ENCODE measurements at regions of chr17 and their contacts with region 1.

Region 1: GRCh38 chr17:7136266-7136877 is 21.8 kb upstream of the ASGR2 start:
- DNase-seq: peak; percentile 81
- H3K4me3 ChIP-seq: no peak overlapping the region
- H3K27ac ChIP-seq: no peak overlapping the region
- H3K4me1 ChIP-seq: peaks cover 23% of the 10 kb centered on the region
- CTCF ChIP-seq: peak; percentile 100

Region 2: DNA sequence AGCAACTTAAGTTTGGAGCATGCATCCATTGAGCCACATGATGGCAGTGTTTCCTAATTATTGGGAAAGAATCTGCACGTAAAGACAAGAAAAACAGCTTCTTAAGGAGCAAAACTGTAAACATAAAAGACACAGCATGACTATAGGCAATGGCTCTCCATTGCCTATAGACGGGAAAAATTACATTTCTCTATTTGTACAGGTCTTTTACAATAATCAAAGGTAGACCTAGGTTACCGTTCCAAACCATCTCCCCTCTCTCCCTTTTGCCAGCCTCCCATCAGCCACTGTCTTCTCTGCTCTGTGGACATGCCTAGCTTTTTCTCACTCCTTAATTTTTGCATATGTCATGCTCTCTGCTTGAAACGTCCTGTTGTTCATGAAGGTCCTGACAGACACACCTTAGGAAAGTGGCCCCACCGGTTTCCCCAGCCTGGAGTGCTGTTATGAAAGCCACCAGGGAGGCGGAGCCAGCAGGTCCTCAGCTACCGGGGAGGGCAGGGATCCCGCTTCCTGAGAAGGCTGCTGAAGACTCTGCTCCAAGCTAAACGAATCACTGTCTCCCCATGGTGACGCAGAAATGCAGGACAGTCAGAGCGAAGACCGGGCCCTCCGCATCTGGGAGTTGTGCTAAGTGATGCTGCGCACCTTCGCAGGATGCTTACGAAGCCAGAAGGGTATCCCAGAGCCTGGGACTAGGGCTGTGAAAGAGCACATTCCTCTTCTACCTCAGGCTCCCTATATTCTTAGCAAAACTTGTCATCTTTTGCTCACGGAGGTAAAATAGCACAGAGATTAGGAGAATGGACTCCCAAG is 90.3 kb before region 1 on chr17:
- CTCF ChIA-PET with region 1: interaction called, 8 read pairs
- POLR2A ChIA-PET with region 1: interaction called, 3 read pairs
- intact Hi-C with region 1: loop called (anchors 1 kb)
- DNase-seq: peak; percentile 74
- H3K4me3 ChIP-seq: peak overlapping the region; percentile 20
- H3K27ac ChIP-seq: no peak overlapping the region
- H3K4me1 ChIP-seq: peaks cover 19% of the 10 kb centered on the region
- CTCF ChIP-seq: peak; percentile 98

Region 3: DNA sequence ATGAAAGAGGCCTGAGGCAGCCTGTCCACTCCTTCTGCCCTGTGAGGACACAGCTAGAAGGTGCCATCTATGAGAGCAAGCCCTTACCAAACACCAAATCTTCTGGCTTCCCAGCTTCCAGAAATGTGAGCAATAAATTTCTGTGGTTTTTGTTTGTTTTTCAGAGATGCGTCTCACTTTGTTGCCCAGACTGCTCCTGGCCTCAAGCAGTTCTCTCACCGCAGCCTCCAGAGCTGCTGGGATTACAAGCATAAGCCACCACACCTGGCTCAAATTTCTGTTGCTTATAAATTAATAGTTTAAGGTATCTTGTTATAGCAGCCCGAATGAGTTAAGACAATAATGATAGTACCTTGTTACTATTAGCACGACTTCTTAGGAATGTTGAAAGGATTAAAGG is 80.0 kb before region 1 on chr17:
- CTCF ChIA-PET with region 1: no interaction called
- POLR2A ChIA-PET with region 1: no interaction called
- intact Hi-C with region 1: loop called (anchors 1 kb)
- DNase-seq: no peak
- H3K4me3 ChIP-seq: no peak overlapping the region
- H3K27ac ChIP-seq: no peak overlapping the region
- H3K4me1 ChIP-seq: no peaks in the 10 kb centered on the region
- CTCF ChIP-seq: no peak

Region 4: GRCh38 chr17:7094652-7095019 is 41.7 kb before region 1 on chr17:
- CTCF ChIA-PET with region 1: no interaction called
- POLR2A ChIA-PET with region 1: no interaction called
- intact Hi-C with region 1: loop called (anchors 5 kb)
- DNase-seq: no peak
- H3K4me3 ChIP-seq: no peak overlapping the region
- H3K27ac ChIP-seq: no peak overlapping the region
- H3K4me1 ChIP-seq: peaks cover 7% of the 10 kb centered on the region
- CTCF ChIP-seq: no peak

Region 5: GRCh38 chr17:7234083-7234951 is 97.9 kb after region 1 on chr17 and contains the start of gene DVL2:
- CTCF ChIA-PET with region 1: no interaction called
- POLR2A ChIA-PET with region 1: no interaction called
- intact Hi-C with region 1: no loop called
- DNase-seq: peak; percentile 96
- H3K4me3 ChIP-seq: peak within 1 kb of the TSS; percentile 97
- H3K27ac ChIP-seq: peak within 1 kb of the TSS; percentile 65
- H3K4me1 ChIP-seq: peaks cover 40% of the 10 kb centered on the region
- CTCF ChIP-seq: no peak
- total RNA-seq, gene DVL2: 84.3 and 98.8 TPM in 2 replicates